Activated T-helper 2 cell treated with anti-CD3 and anti-CD28 coated beads, Interferon-gamma antibody, Interleukin-2, Interleukin-4, amounts not matched to agents 10 μg/mL and 5 μg/mL and 100 μg/mL, durations not matched to agents 14 hours and 24 hours and 36 hours (primary cell): ENCODE measurements at regions of chr6 and their contacts with region 1.

Region 1: DNA sequence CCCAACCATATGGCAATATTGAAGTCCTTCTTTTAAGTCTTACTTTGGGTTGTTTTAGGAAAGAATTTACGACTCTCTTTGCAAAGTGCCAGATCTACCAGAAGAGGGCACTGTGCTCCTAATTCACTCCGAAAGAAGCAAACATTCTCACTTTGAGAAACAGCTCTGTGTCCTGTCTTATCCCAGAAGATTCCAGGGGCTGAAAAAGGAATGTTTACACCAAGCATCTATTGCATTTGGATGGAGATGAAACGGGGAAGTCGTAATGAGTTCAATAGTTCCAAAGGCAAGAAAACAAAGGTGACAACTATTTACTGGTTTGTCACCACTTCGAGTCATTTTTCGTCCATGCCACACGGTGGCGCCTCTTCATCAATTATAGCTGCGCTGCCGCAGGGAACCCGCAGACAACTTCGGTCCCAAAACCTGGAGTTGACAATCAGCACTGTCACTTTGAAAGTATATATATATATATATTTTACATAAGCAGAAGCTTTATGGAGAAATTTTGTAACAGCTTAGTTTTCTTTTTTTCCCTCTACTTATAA is 121.6 kb downstream of the MOXD1 start:
- DNase-seq: peak; percentile 60
- H3K4me3 Mint-ChIP-seq: peak overlapping the region; percentile 82
- H3K27ac Mint-ChIP-seq: no peak overlapping the region
- H3K4me1 Mint-ChIP-seq: peaks cover 2% of the 10 kb centered on the region
- H3K27me3 Mint-ChIP-seq: peaks cover 19% of the 10 kb centered on the region

Region 2: GRCh38 chr6:132483779-132484679 is 204.4 kb after region 1 on chr6:
- intact Hi-C with region 1: loop called (anchors 1 kb)
- DNase-seq: peak; percentile 15
- H3K4me3 Mint-ChIP-seq: no peak overlapping the region
- H3K27ac Mint-ChIP-seq: no peak overlapping the region
- H3K4me1 Mint-ChIP-seq: peaks cover 16% of the 10 kb centered on the region
- H3K27me3 Mint-ChIP-seq: peaks cover 4% of the 10 kb centered on the region

Region 3: DNA sequence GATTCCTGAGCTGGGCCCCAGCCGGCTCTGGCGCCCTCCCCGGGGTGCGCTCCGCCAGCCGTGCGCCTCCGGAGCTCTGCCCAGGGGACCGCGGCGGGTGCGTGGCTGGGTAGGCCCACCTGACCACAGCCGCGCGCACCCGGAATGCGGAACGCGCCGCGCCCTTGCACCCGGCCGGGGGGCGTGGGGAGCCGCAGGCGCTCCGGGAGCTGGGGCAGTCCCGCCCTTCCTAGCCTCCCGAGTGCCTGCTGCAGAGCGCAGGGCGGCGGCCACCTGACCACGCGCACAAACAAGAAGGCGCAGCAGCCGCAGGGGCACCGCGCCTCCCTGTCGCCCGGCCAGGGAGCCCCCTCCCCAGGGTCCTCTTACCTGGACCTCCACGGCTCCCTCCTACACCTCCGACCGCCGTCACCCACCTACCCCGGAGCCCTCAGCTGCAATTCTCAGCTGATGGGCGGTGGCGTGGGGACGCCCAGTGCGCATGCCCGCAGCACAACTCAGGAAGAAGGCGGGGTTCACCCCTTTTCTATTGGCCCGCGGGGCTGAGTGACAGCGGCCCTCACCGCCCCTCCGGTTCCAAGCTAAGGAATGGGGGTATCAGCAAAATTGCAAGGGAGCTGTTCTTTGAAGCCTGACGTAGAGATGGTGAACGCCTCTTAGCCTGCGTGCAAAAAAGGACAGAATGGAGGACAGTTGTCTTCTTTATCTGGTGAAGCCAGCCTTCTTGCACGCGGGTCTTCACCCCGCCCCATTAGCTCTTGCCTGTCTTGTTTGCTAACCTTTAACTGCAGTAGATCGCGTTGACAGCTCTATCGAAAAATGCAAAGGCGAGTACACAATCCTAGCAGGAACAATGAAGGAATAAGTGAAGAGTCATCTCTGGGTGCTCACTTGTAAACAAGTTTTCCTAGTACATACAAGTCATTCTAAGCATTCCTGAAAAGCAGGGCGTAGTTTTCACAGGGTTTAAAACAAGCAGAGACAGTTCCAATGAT is 233.3 kb after region 1 on chr6 and contains the start of gene STX7:
- intact Hi-C with region 1: loop called (anchors 1 kb)
- DNase-seq: peak; percentile 83
- H3K4me3 Mint-ChIP-seq: peak within 1 kb of the TSS; percentile 97
- H3K27ac Mint-ChIP-seq: peak within 1 kb of the TSS; percentile 88
- H3K4me1 Mint-ChIP-seq: peaks cover 24% of the 10 kb centered on the region
- H3K27me3 Mint-ChIP-seq: peaks cover 21% of the 10 kb centered on the region
- total RNA-seq, gene STX7: 18.9 and 21.5 TPM in 2 replicates

Region 4: GRCh38 chr6:132648356-132649227 is 368.9 kb after region 1 on chr6:
- intact Hi-C with region 1: no loop called
- DNase-seq: no peak
- H3K4me3 Mint-ChIP-seq: no peak overlapping the region
- H3K27ac Mint-ChIP-seq: no peak overlapping the region
- H3K4me1 Mint-ChIP-seq: peaks cover 5% of the 10 kb centered on the region
- H3K27me3 Mint-ChIP-seq: peaks cover 19% of the 10 kb centered on the region